ENCODE measurements at regions of chr3 and their contacts with region 1.

Region 1: GRCh38 chr3:52444860-52445793 is at the start of gene SEMA3G:
- DNase-seq: peak; percentile 89
- ATAC-seq: peak; percentile 97
- H3K4me3 Mint-ChIP-seq: no peak within 1 kb of the TSS
- H3K27ac Mint-ChIP-seq: no peak within 1 kb of the TSS
- H3K4me1 Mint-ChIP-seq: peaks cover 12% of the 10 kb centered on the region
- H3K27me3 Mint-ChIP-seq: no peaks in the 10 kb centered on the region
- total RNA-seq, gene SEMA3G: 0.28 to 0.38 TPM

Region 2: GRCh38 chr3:52291508-52292181 is 153.5 kb before region 1 on chr3:
- CTCF ChIA-PET with region 1: interaction called, 11 read pairs
- DNase-seq: peak; percentile 75
- ATAC-seq: no peak
- H3K4me3 Mint-ChIP-seq: no peak overlapping the region
- H3K27ac Mint-ChIP-seq: peak overlapping the region; percentile 76
- H3K4me1 Mint-ChIP-seq: peaks cover 35% of the 10 kb centered on the region
- H3K27me3 Mint-ChIP-seq: no peaks in the 10 kb centered on the region

Region 3: DNA sequence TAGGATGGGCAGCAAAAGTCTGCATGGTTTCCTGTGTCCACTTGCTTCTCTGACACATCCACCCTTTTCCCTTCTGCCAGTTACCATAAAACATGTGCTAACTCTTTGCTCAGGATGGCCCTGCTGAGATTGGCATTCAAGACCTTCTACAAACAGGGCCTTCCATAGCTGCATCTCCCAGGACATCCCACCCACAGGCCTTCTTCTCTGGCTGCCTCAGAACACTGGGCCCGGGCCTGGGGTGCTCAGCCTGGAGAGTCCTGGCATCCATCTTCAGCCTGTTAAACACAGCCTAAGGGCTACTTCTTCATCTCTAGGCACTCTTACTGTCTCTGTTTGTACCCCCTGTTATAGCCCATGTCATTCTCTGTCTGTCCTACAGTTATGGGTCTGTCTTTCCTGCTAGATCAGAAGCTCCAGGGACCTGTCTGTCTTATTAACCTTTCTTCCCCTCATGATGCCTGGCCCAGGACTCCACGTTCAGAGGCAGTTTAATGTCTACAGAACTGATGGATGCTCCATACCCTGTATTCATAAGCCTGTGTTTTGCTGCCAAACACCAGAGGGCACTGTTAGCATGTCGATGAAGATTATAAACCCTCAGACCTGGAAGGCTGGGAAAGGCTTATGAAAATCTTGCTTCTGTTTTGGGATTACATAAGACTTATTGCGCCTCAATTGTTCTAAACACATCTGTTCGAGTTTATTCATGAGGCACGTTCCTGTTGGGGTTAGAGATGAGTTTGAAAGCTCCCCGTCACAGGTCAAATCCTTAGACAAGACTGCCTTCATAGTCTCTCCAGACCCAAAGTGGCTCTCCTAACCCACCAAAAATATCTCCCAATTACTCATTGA is 16.7 kb before region 1 on chr3:
- CTCF ChIA-PET with region 1: interaction called, 105 read pairs
- DNase-seq: peak; percentile 55
- ATAC-seq: peak; percentile 71
- H3K4me3 Mint-ChIP-seq: no peak overlapping the region
- H3K27ac Mint-ChIP-seq: no peak overlapping the region
- H3K4me1 Mint-ChIP-seq: peaks cover 11% of the 10 kb centered on the region
- H3K27me3 Mint-ChIP-seq: peaks cover 2% of the 10 kb centered on the region

Region 4: GRCh38 chr3:52455283-52456168 is 10.4 kb after region 1 on chr3 and contains the start of gene NISCH:
- CTCF ChIA-PET with region 1: interaction called, 33 read pairs
- DNase-seq: peak; percentile 94
- ATAC-seq: peak; percentile 95
- H3K4me3 Mint-ChIP-seq: peak within 1 kb of the TSS; percentile 95
- H3K27ac Mint-ChIP-seq: peak within 1 kb of the TSS; percentile 94
- H3K4me1 Mint-ChIP-seq: peaks cover 41% of the 10 kb centered on the region
- H3K27me3 Mint-ChIP-seq: no peaks in the 10 kb centered on the region
- total RNA-seq, gene NISCH: 72.9 to 84.1 TPM

Region 5: DNA sequence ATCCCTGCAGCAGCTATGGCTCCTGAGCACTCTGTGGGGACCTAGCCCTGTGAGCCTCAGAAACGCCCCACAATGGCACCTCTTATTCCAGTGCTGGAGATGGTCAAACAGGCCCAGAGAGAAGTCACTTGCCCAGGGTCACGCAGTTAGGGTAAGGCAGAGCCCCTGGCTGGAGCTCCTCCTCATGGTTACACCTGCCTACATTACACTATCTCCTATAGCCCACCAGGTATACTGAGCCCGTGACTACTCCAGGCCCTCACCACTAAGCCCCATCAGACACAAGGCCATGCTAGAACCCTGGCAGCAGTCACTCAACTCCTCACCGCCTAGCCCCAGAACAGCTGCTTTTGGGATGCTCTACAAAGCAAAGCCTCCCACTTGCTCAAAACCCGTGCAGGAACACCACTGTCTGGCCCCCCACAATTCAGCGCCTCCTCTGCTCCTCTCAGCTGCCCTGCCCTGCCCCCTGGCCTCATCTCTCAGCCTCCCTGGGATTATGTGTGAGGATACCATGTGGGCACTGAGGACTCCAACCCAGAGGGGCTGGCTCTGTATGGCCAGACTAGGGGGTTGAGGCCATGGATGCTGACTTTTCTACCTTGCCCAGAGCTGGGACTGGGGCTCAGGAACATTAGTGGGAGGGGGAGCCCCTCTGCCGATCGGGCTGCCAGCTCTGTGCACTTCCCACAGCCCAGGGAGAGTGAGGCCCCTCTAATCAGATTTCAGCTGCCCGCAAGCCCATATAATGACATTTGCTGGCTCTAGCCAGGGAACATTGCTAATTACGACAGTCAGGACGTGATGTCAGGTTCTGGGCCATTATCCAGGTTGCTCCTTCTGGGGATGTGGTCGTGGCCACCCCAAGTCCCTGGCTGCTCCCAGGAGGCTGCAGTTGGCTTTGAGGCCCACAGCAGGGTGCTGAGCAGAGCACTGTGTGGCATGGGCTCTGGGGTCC is 84.5 kb after region 1 on chr3:
- CTCF ChIA-PET with region 1: no interaction called
- DNase-seq: no peak
- ATAC-seq: no peak
- H3K4me3 Mint-ChIP-seq: no peak overlapping the region
- H3K27ac Mint-ChIP-seq: no peak overlapping the region
- H3K4me1 Mint-ChIP-seq: peaks cover 13% of the 10 kb centered on the region
- H3K27me3 Mint-ChIP-seq: no peaks in the 10 kb centered on the region